Activated T-helper 1 cell treated with anti-CD3 and anti-CD28 coated beads, Interleukin-12 subunit alpha, Interleukin-12 subunit beta, Interleukin-2, Interleukin-4 antibody, amounts not matched to agents 30 ng/mL and 10 ng/mL and 1 ng/mL, durations not matched to agents 14 hours and 24 hours and 36 hours (primary cell): ENCODE measurements at regions of chr6 and their contacts with region 1.

Region 1: GRCh38 chr6:138109042-138109997 is 2.1 kb upstream of the PERP start:
- DNase-seq: peak; percentile 67
- H3K4me3 Mint-ChIP-seq: peak overlapping the region; percentile 62
- H3K27ac Mint-ChIP-seq: no peak overlapping the region
- H3K4me1 Mint-ChIP-seq: peaks cover 29% of the 10 kb centered on the region
- H3K27me3 Mint-ChIP-seq: peaks cover 28% of the 10 kb centered on the region

Region 2: DNA sequence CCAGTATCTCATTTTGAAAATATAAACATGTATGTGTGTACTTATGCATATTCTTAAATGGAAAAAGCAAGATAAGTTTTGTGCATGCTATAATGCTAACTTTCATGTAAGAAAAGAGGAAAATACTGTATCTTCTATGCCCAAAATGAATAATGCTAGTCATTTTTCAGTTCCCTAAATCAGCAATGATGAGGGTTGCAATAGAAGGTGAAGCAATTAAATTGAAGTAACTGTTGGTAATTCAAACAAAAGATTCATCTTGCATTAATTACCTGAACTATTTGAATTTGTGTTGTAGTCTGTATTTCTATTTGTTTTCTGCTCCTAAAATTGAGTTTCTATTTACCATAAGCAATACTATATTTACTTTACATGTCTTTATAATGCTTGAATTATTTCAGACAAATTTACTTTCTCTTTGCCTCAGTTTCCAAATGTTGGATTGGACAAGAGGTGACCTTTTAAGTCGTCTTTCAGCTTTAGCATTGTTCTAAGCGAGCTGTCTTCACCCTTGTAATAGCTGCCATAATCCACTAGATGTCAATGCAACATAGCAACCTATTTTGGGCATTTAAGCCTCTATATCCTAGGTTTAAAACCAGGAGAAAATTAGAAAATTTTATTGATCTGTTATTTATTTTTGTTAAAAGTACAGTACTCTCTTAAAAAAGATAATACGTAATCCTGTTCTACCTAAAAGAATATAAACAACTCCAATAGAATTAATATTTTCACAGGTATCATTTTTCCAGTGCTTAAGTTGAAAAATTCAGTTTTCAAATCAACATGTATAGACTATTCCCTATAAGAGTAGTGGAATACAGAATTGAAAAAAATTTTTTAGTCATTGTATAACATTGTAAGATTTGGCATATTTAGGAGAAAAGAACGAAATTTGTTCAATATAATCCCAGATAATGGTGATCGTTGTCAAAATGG is 837.8 kb before region 1 on chr6:
- intact Hi-C with region 1: loop called (anchors 1 kb)
- DNase-seq: no peak
- H3K4me3 Mint-ChIP-seq: no peak overlapping the region
- H3K27ac Mint-ChIP-seq: no peak overlapping the region
- H3K4me1 Mint-ChIP-seq: peaks cover 13% of the 10 kb centered on the region
- H3K27me3 Mint-ChIP-seq: peaks cover 31% of the 10 kb centered on the region

Region 3: GRCh38 chr6:137497721-137498463 is 611.4 kb before region 1 on chr6:
- intact Hi-C with region 1: loop called (anchors 2 kb)
- DNase-seq: no peak
- H3K4me3 Mint-ChIP-seq: no peak overlapping the region
- H3K27ac Mint-ChIP-seq: no peak overlapping the region
- H3K4me1 Mint-ChIP-seq: peaks cover 20% of the 10 kb centered on the region
- H3K27me3 Mint-ChIP-seq: peaks cover 80% of the 10 kb centered on the region

Region 4: DNA sequence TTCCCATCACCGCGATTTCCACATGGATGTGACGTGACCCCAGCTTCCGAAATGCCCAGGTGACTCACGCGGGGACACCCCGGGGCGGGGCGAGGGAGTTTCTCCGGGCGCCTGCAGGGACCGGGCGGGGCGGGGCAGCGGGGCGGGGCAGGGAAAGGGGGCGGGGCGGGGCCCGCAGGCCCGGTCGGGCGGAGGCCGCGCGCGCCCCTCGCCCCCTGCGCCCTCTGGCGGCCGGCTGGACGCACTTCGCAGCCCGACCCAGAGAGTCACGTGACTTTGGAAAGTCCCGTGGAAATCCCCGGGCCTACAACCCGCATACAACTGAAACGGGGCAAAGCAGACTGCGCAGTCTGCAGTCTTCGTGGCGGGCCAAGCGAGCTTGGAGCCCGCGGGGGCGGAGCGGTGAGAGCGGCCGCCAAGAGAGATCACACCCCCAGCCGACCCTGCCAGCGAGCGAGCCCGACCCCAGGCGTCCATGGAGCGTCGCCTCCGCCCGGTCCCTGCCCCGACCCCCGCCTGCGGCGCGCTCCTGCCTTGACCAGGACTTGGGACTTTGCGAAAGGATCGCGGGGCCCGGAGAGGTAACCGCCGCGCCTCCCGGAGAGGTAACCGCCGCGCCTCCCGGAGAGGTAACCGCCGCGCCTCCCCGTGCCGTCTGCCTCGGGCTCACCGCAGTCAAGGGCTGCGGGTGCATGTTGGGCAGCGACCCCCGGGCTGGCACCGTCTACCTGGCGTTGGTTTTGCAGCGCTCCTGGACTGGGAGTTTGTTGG is 242.2 kb before region 1 on chr6 and contains the start of gene TNFAIP3:
- intact Hi-C with region 1: loop called (anchors 1 kb)
- DNase-seq: peak; percentile 96
- H3K4me3 Mint-ChIP-seq: peak within 1 kb of the TSS; percentile 98
- H3K27ac Mint-ChIP-seq: peak within 1 kb of the TSS; percentile 99
- H3K4me1 Mint-ChIP-seq: peaks cover 46% of the 10 kb centered on the region
- H3K27me3 Mint-ChIP-seq: no peaks in the 10 kb centered on the region
- total RNA-seq, gene TNFAIP3: 250 and 257 TPM in 2 replicates

Region 5: DNA sequence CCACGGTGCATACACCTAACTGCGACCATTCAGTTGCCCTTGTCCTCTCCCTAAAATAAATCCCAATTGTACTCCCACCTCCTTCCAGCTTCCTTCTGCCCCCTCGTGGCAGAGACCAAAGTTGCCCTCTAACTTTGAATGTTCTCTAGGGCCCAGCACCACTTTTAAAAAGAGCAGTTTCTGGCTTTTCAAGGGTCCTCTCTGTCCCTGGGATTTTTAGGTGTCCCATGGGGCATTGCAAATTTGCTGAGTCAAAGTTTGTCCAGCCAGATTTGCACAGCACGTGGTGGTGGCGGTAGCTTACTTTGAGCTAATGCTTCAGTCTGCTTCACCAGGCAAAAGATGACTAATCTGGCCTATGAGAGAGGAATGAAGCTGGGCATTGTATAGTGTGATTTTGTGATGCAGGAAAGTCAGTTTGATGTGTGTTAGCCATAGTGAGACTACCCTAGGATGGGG is 102.3 kb before region 1 on chr6:
- intact Hi-C with region 1: loop called (anchors 1 kb)
- DNase-seq: no peak
- H3K4me3 Mint-ChIP-seq: no peak overlapping the region
- H3K27ac Mint-ChIP-seq: no peak overlapping the region
- H3K4me1 Mint-ChIP-seq: peaks cover 17% of the 10 kb centered on the region
- H3K27me3 Mint-ChIP-seq: peaks cover 3% of the 10 kb centered on the region

Region 6: DNA sequence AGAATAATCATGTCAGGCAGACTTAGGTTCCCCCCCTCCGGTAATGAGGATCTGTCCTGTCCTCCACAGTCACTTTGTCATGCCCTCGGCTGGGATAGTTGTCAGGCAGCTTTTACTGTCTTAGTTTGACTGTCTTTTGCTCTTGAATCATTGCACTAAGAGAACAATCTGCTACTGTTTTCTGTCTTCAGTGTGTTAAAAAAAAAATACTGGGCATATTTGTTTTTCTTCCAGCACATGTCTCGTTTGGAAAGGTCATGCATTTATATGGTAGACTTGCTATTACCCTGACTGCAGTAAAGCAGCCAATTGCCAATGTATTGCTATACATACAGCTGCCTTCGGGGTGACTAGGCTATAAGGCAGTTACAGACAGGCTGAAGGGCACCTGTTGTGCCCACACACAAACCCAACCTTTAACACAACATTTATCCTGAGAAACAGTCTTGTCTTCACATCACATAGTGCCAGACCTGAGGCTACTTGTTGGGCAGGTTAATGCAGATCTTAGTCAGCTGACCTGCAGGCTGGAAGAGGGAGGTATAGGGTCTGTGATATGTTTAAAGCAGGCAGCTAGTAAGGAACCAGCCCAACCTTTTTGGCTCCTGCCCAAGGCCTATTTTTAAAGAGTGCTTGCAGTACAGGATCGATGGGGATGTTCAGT is 79.1 kb after region 1 on chr6:
- intact Hi-C with region 1: no loop called
- DNase-seq: no peak
- H3K4me3 Mint-ChIP-seq: no peak overlapping the region
- H3K27ac Mint-ChIP-seq: no peak overlapping the region
- H3K4me1 Mint-ChIP-seq: no peaks in the 10 kb centered on the region
- H3K27me3 Mint-ChIP-seq: peaks cover 5% of the 10 kb centered on the region

Region 7: GRCh38 chr6:138773177-138774091 is 664.1 kb after region 1 on chr6 and contains the start of gene CCDC28A:
- intact Hi-C with region 1: loop called (anchors 5 kb)
- DNase-seq: peak; percentile 89
- H3K4me3 Mint-ChIP-seq: peak within 1 kb of the TSS; percentile 99
- H3K27ac Mint-ChIP-seq: peak within 1 kb of the TSS; percentile 100
- H3K4me1 Mint-ChIP-seq: peaks cover 23% of the 10 kb centered on the region
- H3K27me3 Mint-ChIP-seq: no peaks in the 10 kb centered on the region
- total RNA-seq, gene CCDC28A: 16.1 and 17.9 TPM in 2 replicates